ENCODE measurements at regions of chr18 and their contacts with region 1.

Region 1: GRCh38 chr18:50287441-50288347 is at the start of gene CXXC1:
- DNase-seq: peak; percentile 99
- ATAC-seq: peak; percentile 95
- total RNA-seq, gene CXXC1: 32.8 TPM

Region 2: DNA sequence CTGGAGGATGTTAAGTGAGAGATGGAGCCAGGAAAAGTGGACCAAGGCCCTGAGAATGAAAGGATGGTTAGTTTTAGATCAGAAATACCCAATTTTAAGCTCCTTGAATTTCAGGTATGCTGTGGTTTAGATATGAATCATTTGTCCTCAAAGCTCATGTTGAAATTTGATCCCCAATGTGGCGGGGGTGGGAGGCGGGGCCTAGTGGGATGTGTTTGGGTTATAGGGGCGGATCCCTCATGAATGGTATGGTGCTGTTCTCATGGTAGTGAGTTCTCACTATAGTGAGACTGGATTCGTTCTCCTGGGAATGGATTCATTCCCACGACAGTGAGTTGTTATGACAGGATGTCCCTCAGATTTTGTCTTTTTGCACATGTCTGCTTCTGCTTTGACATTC is 104.1 kb before region 1 on chr18:
- intact Hi-C with region 1: no loop called
- DNase-seq: no peak
- ATAC-seq: no peak

Region 3: DNA sequence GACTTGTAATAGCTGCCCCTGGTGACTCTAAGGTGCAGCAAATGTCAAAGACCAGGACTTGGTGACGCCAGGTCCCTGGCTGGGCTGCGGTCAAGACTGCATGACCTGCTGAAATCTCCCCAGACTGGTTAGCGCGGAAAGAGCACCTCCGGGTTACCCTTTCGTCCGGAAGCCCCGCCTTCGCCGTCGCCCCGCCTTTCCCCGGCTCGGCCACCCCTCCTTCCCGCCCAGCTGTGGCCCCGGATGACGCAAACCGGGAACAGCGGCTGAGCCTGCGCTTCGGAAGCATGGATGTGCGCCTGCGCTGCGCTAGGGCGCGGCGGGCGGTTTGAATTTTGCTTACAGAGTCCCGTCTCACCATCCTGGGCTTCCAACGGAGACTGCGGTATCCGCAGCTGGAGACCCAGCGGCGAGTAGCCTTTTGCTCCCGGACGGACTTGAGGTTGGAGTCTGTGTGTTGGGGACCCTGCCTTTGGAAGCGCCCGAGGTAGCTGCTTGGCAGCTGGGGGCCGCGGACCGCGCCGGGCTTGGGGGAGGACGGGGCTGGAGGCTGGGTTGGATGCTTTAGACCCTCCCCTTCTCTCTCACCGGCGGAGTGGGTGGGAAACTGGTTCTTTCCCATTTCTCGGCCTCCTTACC is 87.2 kb after region 1 on chr18 and contains the start of gene SKA1:
- intact Hi-C with region 1: loop called (anchors 2 kb)
- DNase-seq: peak; percentile 97
- ATAC-seq: peak; percentile 100
- total RNA-seq, gene SKA1: 0.38 TPM

Measured in Right ventricle myocardium inferior (tissue), 1 donor.